Gastrocnemius medialis (tissue), 4 donors: ENCODE measurements at regions of chr12 and their contacts with region 1.

Region 1: GRCh38 chr12:46145881-46146280 is 123.0 kb downstream of the SLC38A1 start:
- DNase-seq: no peak
- ATAC-seq: no peak
- H3K4me3 ChIP-seq: no peak overlapping the region
- H3K27ac ChIP-seq: no peak overlapping the region
- H3K4me1 ChIP-seq: no peaks in the 10 kb centered on the region
- H3K27me3 ChIP-seq: no peaks in the 10 kb centered on the region
- CTCF ChIP-seq: no peak
- POLR2A ChIP-seq: no peak

Region 2: DNA sequence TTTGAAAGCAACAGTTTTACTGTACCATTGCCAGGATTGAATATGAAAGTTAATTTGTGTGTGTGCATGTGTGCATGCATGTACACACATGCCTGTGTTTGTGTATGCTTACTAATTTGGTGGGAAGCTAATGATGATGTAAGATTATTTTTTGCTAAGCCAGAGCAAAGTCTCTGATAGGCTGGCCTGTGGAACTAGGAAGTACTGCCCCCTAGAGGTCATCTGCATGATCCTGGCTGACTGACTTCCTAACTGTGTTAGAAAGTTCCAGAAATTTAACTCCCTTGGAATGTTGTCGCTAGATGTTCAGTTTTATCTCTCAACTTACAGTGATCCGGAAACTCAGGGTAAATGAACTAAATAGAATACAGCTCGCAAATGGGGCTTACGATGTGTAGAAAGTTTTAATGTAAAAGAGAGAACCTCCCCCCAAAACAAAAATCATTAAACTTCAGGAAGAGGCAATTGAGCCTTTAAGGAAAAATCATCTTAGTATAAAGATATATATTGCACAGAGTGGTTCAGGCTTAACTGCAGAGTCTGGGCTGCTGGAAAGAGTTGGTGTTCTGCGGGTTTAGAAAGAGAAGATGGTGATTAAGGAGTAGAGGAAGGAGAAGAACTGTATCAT is 157.3 kb after region 1 on chr12:
- in situ Hi-C with region 1: no loop called
- intact Hi-C with region 1: loop called (anchors 1 kb)
- DNase-seq: peak in 1 of 2 donors; percentile 19
- ATAC-seq: peak; percentile 39 to 84
- H3K4me3 ChIP-seq: no peak overlapping the region
- H3K27ac ChIP-seq: no peak overlapping the region
- H3K4me1 ChIP-seq: no peaks in the 10 kb centered on the region
- H3K27me3 ChIP-seq: no peaks in the 10 kb centered on the region
- CTCF ChIP-seq: peak; percentile 44 to 68 (median 51)
- POLR2A ChIP-seq: no peak